ENCODE measurements at regions of chr10 and their contacts with region 1.

Region 1: GRCh38 chr10:110172155-110172554 is 35.2 kb upstream of the MXI1 start:
- DNase-seq: no peak
- ATAC-seq: no peak
- H3K4me3 ChIP-seq: no peak overlapping the region
- H3K27ac ChIP-seq: no peak overlapping the region
- H3K4me1 ChIP-seq: peaks cover 0 to 10% of the 10 kb centered on the region in 2 experiments; a peak in 2 of 4 replicates
- H3K27me3 ChIP-seq: peaks cover 22% of the 10 kb centered on the region
- CTCF ChIP-seq: no peak
- POLR2A ChIP-seq: no peak
- RAD21 ChIP-seq: no peak

Region 2: GRCh38 chr10:110059925-110060324 is 112.2 kb before region 1 on chr10:
- CTCF ChIA-PET with region 1: no interaction called
- POLR2A ChIA-PET with region 1: no interaction called
- RAD21 ChIA-PET with region 1: no interaction called
- intact Hi-C with region 1: no loop called
- DNase-seq: no peak
- ATAC-seq: no peak
- H3K4me3 ChIP-seq: no peak overlapping the region
- H3K27ac ChIP-seq: no peak overlapping the region
- H3K4me1 ChIP-seq: no peaks in the 10 kb centered on the region
- H3K27me3 ChIP-seq: no peaks in the 10 kb centered on the region
- CTCF ChIP-seq: no peak
- POLR2A ChIP-seq: no peak
- RAD21 ChIP-seq: no peak

Region 3: DNA sequence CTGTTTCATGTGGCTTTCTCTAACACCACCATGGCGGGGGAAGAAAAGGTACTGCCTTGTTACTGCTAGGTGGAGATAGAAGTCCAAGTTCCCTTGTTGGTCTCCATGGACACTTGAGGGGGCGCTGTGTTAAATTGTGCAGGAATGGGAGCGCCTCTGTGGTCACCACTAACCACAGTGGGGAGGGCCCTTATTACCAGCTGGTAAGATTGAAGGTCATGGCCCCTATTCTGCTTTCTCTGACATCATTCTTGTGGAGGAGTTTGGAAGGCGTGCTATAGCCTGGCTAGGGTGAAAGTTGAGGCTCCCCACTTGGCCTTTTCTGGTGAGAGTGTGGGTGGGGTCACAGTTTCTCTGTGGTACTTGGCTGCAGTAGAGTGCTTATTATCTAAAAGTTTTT is 20.4 kb after region 1 on chr10:
- CTCF ChIA-PET with region 1: no interaction called
- POLR2A ChIA-PET with region 1: no interaction called
- RAD21 ChIA-PET with region 1: no interaction called
- intact Hi-C with region 1: loop called (anchors 2 kb)
- DNase-seq: no peak
- ATAC-seq: peak; percentile 88
- H3K4me3 ChIP-seq: no peak overlapping the region
- H3K27ac ChIP-seq: no peak overlapping the region
- H3K4me1 ChIP-seq: no peaks in the 10 kb centered on the region
- H3K27me3 ChIP-seq: 0 out of 2 replicates have a peak, but pooled peaks cover 8% of the 10 kb centered on the region
- CTCF ChIP-seq: peak in 2 of 3 experiments; percentile 51 to 57; a peak in 4 of 6 replicates
- POLR2A ChIP-seq: no peak
- RAD21 ChIP-seq: no peak

Measured in HCT116 (cell line).